Heart right ventricle (tissue), 16 donors: ENCODE measurements at regions of chr1 and their contacts with region 1.

Region 1: GRCh38 chr1:167797015-167797414 is 75.2 kb downstream of the MPZL1 start:
- DNase-seq: peak; percentile 59 to 80
- ATAC-seq: peak; percentile 93 to 99 (median 97)
- H3K4me3 ChIP-seq: no peak overlapping the region
- H3K27ac ChIP-seq: peak overlapping the region; percentile 33 to 86 (median 78)
- H3K4me1 ChIP-seq: peaks cover 10 to 39% (median 32%) of the 10 kb centered on the region in 9 donors
- H3K27me3 ChIP-seq: no peaks in the 10 kb centered on the region
- CTCF ChIP-seq: peak in 3 of 9 donors; percentile 15 to 32 (median 21)

Region 2: GRCh38 chr1:167756730-167757405 is 40.1 kb before region 1 on chr1:
- intact Hi-C with region 1: loop called in 1 of 10 experiments (anchors 5 kb)
- DNase-seq: peak; percentile 43
- ATAC-seq: peak; percentile 73 to 96 (median 88)
- H3K4me3 ChIP-seq: no peak overlapping the region
- H3K27ac ChIP-seq: peak overlapping the region in 6 of 10 donors; percentile 5 to 59 (median 28)
- H3K4me1 ChIP-seq: peaks cover 3 to 69% (median 39%) of the 10 kb centered on the region in 9 donors
- H3K27me3 ChIP-seq: no peaks in the 10 kb centered on the region
- CTCF ChIP-seq: no peak

Region 3: GRCh38 chr1:167893798-167894197 is 96.8 kb after region 1 on chr1:
- intact Hi-C with region 1: no loop called
- DNase-seq: no peak
- ATAC-seq: no peak
- H3K4me3 ChIP-seq: no peak overlapping the region
- H3K27ac ChIP-seq: no peak overlapping the region
- H3K4me1 ChIP-seq: peaks cover 0 to 1% (median 0%) of the 10 kb centered on the region in 9 donors
- H3K27me3 ChIP-seq: no peaks in the 10 kb centered on the region
- CTCF ChIP-seq: no peak